ENCODE measurements at regions of chr2 and their contacts with region 1.

Region 1: GRCh38 chr2:239991689-239992314 is 33.3 kb downstream of the NDUFA10 start:
- DNase-seq: no peak
- ATAC-seq: no peak
- H3K4me3 ChIP-seq: no peak overlapping the region
- H3K27ac ChIP-seq: no peak overlapping the region
- H3K4me1 ChIP-seq: no peaks in the 10 kb centered on the region
- H3K27me3 ChIP-seq: no peaks in the 10 kb centered on the region

Region 2: GRCh38 chr2:239035361-239036078 is 956.3 kb before region 1 on chr2:
- intact Hi-C with region 1: loop called (anchors 10 kb)
- DNase-seq: peak in 1 of 2 donors; percentile 90
- ATAC-seq: peak; percentile 78
- H3K4me3 ChIP-seq: no peak overlapping the region
- H3K27ac ChIP-seq: no peak overlapping the region
- H3K4me1 ChIP-seq: no peaks in the 10 kb centered on the region
- H3K27me3 ChIP-seq: no peaks in the 10 kb centered on the region

Region 3: GRCh38 chr2:239763433-239764097 is 228.2 kb before region 1 on chr2:
- intact Hi-C with region 1: loop called in 1 of 2 experiments (anchors 5 kb)
- DNase-seq: peak; percentile 15 to 49
- ATAC-seq: no peak
- H3K4me3 ChIP-seq: no peak overlapping the region
- H3K27ac ChIP-seq: no peak overlapping the region
- H3K4me1 ChIP-seq: no peaks in the 10 kb centered on the region
- H3K27me3 ChIP-seq: no peaks in the 10 kb centered on the region

Region 4: GRCh38 chr2:239934571-239935171 is 57.1 kb before region 1 on chr2:
- intact Hi-C with region 1: loop called (anchors 1 to 2 kb)
- DNase-seq: peak; percentile 80 to 84
- ATAC-seq: peak; percentile 83
- H3K4me3 ChIP-seq: no peak overlapping the region
- H3K27ac ChIP-seq: no peak overlapping the region
- H3K4me1 ChIP-seq: no peaks in the 10 kb centered on the region
- H3K27me3 ChIP-seq: no peaks in the 10 kb centered on the region